Activated T-helper 2 cell treated with anti-CD3 and anti-CD28 coated beads, Interferon-gamma antibody, Interleukin-2, Interleukin-4, amounts not matched to agents 10 μg/mL and 5 μg/mL and 100 μg/mL, durations not matched to agents 14 hours and 24 hours and 36 hours (primary cell): ENCODE measurements at regions of chr4 and their contacts with region 1.

Region 1: DNA sequence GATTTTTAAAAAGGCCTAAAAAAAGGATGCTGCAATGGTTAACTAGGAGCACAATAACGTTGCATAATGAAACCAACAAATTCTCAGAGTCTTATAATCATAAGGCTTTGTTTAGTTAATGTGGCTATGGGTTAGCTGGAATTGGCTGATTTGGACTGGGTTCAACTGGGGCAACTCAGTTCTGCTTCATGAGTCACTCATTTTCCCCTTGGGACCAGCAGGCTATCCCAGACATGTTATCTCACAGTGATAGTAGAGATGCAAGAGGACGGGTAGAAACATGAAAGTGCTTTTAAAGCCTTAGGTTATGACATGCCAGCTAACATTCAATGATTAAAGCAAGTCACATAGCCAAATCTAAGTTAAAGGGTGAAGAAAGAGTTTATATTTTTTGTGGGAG is 189.2 kb upstream of the GK2 start:
- DNase-seq: no peak
- H3K4me3 Mint-ChIP-seq: no peak overlapping the region
- H3K27ac Mint-ChIP-seq: no peak overlapping the region
- H3K4me1 Mint-ChIP-seq: no peaks in the 10 kb centered on the region
- H3K27me3 Mint-ChIP-seq: peaks cover 13% of the 10 kb centered on the region

Region 2: GRCh38 chr4:80202190-80202711 is 605.0 kb after region 1 on chr4:
- intact Hi-C with region 1: loop called (anchors 10 kb)
- DNase-seq: peak; percentile 70
- H3K4me3 Mint-ChIP-seq: peak overlapping the region; percentile 72
- H3K27ac Mint-ChIP-seq: peak overlapping the region; percentile 33
- H3K4me1 Mint-ChIP-seq: peaks cover 19% of the 10 kb centered on the region
- H3K27me3 Mint-ChIP-seq: peaks cover 58% of the 10 kb centered on the region